ENCODE measurements at regions of chr15 and their contacts with region 1.

Region 1: GRCh38 chr15:34587717-34588674 is 4.5 kb upstream of the GOLGA8B start:
- DNase-seq: peak; percentile 80
- ATAC-seq: peak; percentile 64
- H3K4me3 ChIP-seq: peak overlapping the region; percentile 58
- H3K27ac ChIP-seq: no peak overlapping the region
- H3K4me1 ChIP-seq: peaks cover 6% of the 10 kb centered on the region; the same call in 1 of the 2 replicates
- H3K27me3 ChIP-seq: no peaks in the 10 kb centered on the region
- CTCF ChIP-seq: peak; percentile 91

Region 2: GRCh38 chr15:34217587-34218225 is 370.3 kb before region 1 on chr15:
- CTCF ChIA-PET with region 1: no interaction called
- POLR2A ChIA-PET with region 1: no interaction called
- intact Hi-C with region 1: loop called (anchors 1 kb)
- DNase-seq: peak; percentile 95
- ATAC-seq: peak; percentile 76
- H3K4me3 ChIP-seq: peak overlapping the region; percentile 38
- H3K27ac ChIP-seq: peak overlapping the region; percentile 99
- H3K4me1 ChIP-seq: peaks cover 28% of the 10 kb centered on the region
- H3K27me3 ChIP-seq: no peaks in the 10 kb centered on the region
- CTCF ChIP-seq: no peak

Region 3: GRCh38 chr15:34610354-34610753 is 22.4 kb after region 1 on chr15:
- CTCF ChIA-PET with region 1: no interaction called
- POLR2A ChIA-PET with region 1: no interaction called
- intact Hi-C with region 1: no loop called
- DNase-seq: peak; percentile 56
- ATAC-seq: peak; percentile 94
- H3K4me3 ChIP-seq: no peak overlapping the region
- H3K27ac ChIP-seq: no peak overlapping the region
- H3K4me1 ChIP-seq: no peaks in the 10 kb centered on the region
- H3K27me3 ChIP-seq: peaks cover 62% of the 10 kb centered on the region
- CTCF ChIP-seq: peak; percentile 67

Measured in PC-3 (cell line).